Heart right ventricle (tissue), 16 donors: ENCODE measurements at regions of chr7 and their contacts with region 1.

Region 1: GRCh38 chr7:75878769-75879611 is at the start of gene RHBDD2:
- DNase-seq: peak; percentile 96 to 97
- ATAC-seq: peak; percentile 98 to 99 (median 99)
- H3K4me3 ChIP-seq: peak within 1 kb of the TSS; percentile 61 to 97 (median 78)
- H3K27ac ChIP-seq: peak within 1 kb of the TSS; percentile 47 to 91 (median 84)
- H3K4me1 ChIP-seq: peaks cover 5 to 52% (median 19%) of the 10 kb centered on the region in 9 donors
- H3K27me3 ChIP-seq: no peaks in the 10 kb centered on the region
- CTCF ChIP-seq: peak in 5 of 9 donors; percentile 26 to 53 (median 33)
- total RNA-seq, gene RHBDD2: 20.8 to 39.7 (median 27.4) TPM

Region 2: GRCh38 chr7:75905785-75906604 is 27.0 kb after region 1 on chr7:
- intact Hi-C with region 1: no loop called
- DNase-seq: peak; percentile 25 to 61
- ATAC-seq: peak; percentile 53 to 94 (median 72)
- H3K4me3 ChIP-seq: no peak overlapping the region
- H3K27ac ChIP-seq: peak overlapping the region in 8 of 10 donors; percentile 13 to 66 (median 45)
- H3K4me1 ChIP-seq: peaks cover 0 to 11% (median 0%) of the 10 kb centered on the region in 9 donors
- H3K27me3 ChIP-seq: no peaks in the 10 kb centered on the region
- CTCF ChIP-seq: no peak

Region 3: DNA sequence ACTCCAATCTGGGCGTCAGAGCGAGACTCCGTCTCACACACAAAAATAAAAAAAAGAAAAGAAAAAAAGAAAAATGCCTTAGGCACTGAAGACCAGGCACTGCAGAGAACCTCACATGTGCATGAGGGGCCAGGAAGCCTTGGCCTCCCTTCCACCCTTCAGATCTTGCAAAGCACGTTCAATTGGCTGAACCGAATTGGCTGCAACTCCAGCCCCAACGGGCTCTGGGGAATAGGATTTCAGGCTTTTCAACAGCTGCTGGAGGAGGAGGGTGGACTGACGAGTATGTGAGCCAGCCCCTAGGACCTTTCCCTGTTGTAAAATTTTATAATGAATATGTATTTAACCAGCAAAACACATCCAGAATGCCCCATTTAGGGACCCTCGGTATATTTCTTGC is 98.8 kb after region 1 on chr7:
- intact Hi-C with region 1: loop called in 1 of 10 experiments (anchors 5 kb)
- DNase-seq: peak; percentile 68 to 82
- ATAC-seq: peak in 7 of 8 donors; percentile 34 to 72 (median 60)
- H3K4me3 ChIP-seq: no peak overlapping the region
- H3K27ac ChIP-seq: peak overlapping the region in 3 of 10 donors; percentile 3 to 51 (median 49)
- H3K4me1 ChIP-seq: peaks cover 12 to 42% (median 17%) of the 10 kb centered on the region in 9 donors
- H3K27me3 ChIP-seq: no peaks in the 10 kb centered on the region
- CTCF ChIP-seq: no peak

Region 4: DNA sequence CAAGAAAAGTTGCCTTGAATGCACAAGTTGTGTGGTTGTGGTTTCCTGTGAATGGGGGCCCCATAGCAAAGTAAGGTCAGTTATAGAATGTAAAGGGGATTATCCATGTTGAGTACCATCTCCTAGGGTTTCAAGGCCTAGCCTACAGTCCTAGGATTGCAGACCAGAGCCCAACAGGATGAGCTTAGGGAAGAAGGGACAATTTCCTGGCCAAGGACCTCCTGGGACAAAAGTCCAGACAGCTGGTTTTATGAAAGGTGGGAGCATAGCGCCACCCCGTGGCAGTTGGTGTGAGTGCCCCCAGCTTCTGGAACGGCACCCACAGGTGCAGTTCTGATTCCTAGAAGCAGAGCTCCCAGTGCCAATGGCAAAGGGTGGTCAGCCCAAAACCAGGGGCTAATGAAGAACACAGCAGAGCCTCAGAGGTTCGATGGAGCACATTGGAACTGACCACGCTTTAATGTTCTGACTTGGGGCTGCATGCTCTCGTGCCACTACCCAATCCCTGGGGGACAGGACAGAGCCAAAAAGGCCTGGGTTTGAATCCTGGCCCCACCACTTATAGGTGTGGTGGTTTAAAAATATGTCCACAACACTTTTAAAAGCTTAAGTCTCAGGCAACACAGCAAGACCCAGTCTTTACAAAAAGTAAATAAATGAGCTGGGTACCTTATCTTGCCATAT is 141.2 kb after region 1 on chr7:
- intact Hi-C with region 1: loop called in 1 of 10 experiments (anchors 5 kb)
- DNase-seq: peak; percentile 78 to 82
- ATAC-seq: peak; percentile 74 to 86 (median 82)
- H3K4me3 ChIP-seq: no peak overlapping the region
- H3K27ac ChIP-seq: peak overlapping the region in 1 of 10 donors; percentile 4
- H3K4me1 ChIP-seq: peaks cover 0 to 27% (median 15%) of the 10 kb centered on the region in 9 donors
- H3K27me3 ChIP-seq: no peaks in the 10 kb centered on the region
- CTCF ChIP-seq: peak; percentile 79 to 96 (median 92)